Activated T-helper 1 cell treated with anti-CD3 and anti-CD28 coated beads, Interleukin-12 subunit alpha, Interleukin-12 subunit beta, Interleukin-2, Interleukin-4 antibody, amounts not matched to agents 30 ng/mL and 10 ng/mL and 1 ng/mL, durations not matched to agents 14 hours and 24 hours and 36 hours (primary cell): ENCODE measurements at regions of chr7 and their contacts with region 1.

Region 1: GRCh38 chr7:50142425-50143017 is 49.5 kb upstream of the ZPBP start:
- DNase-seq: no peak
- H3K4me3 Mint-ChIP-seq: peak overlapping the region; percentile 27
- H3K27ac Mint-ChIP-seq: peak overlapping the region; percentile 2
- H3K4me1 Mint-ChIP-seq: peaks cover 34% of the 10 kb centered on the region
- H3K27me3 Mint-ChIP-seq: peaks cover 11% of the 10 kb centered on the region

Region 2: GRCh38 chr7:50047716-50048115 is 94.8 kb before region 1 on chr7:
- intact Hi-C with region 1: no loop called
- DNase-seq: no peak
- H3K4me3 Mint-ChIP-seq: no peak overlapping the region
- H3K27ac Mint-ChIP-seq: no peak overlapping the region
- H3K4me1 Mint-ChIP-seq: no peaks in the 10 kb centered on the region
- H3K27me3 Mint-ChIP-seq: peaks cover 6% of the 10 kb centered on the region

Region 3: GRCh38 chr7:50317221-50317678 is 174.7 kb after region 1 on chr7:
- intact Hi-C with region 1: loop called (anchors 1 kb)
- DNase-seq: peak; percentile 53
- H3K4me3 Mint-ChIP-seq: peak overlapping the region; percentile 82
- H3K27ac Mint-ChIP-seq: peak overlapping the region; percentile 93
- H3K4me1 Mint-ChIP-seq: peaks cover 100% of the 10 kb centered on the region
- H3K27me3 Mint-ChIP-seq: no peaks in the 10 kb centered on the region

Region 4: GRCh38 chr7:50331564-50332208 is 189.2 kb after region 1 on chr7:
- intact Hi-C with region 1: no loop called
- DNase-seq: no peak
- H3K4me3 Mint-ChIP-seq: peak overlapping the region; percentile 73
- H3K27ac Mint-ChIP-seq: peak overlapping the region; percentile 81
- H3K4me1 Mint-ChIP-seq: peaks cover 60% of the 10 kb centered on the region
- H3K27me3 Mint-ChIP-seq: no peaks in the 10 kb centered on the region

Region 5: DNA sequence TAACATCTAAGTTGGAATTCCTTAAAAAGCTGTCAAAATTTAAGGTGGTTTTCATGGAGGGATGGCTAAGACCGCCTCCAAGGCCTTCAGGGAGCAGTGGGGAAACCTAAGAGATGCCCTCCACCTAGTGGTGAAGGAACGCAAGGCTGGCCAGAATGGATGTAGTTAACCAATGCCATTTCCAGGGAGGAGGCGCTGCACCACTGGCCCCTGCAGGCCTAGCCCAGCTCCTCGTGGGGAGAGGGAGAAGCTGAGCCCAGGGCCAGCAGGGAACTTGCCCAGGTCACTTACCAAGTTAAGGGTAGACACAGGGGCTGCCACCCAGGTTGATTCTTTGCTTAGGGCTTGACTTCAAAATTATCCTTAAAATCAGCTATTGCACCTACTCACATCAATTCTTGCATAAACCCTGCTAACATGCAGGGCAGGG is 275.6 kb after region 1 on chr7:
- intact Hi-C with region 1: loop called (anchors 1 kb)
- DNase-seq: peak; percentile 64
- H3K4me3 Mint-ChIP-seq: no peak overlapping the region
- H3K27ac Mint-ChIP-seq: no peak overlapping the region
- H3K4me1 Mint-ChIP-seq: peaks cover 32% of the 10 kb centered on the region
- H3K27me3 Mint-ChIP-seq: no peaks in the 10 kb centered on the region

Region 6: GRCh38 chr7:50632561-50633413 is 490.3 kb after region 1 on chr7:
- intact Hi-C with region 1: loop called (anchors 1 kb)
- DNase-seq: peak; percentile 24
- H3K4me3 Mint-ChIP-seq: no peak overlapping the region
- H3K27ac Mint-ChIP-seq: no peak overlapping the region
- H3K4me1 Mint-ChIP-seq: peaks cover 4% of the 10 kb centered on the region
- H3K27me3 Mint-ChIP-seq: peaks cover 17% of the 10 kb centered on the region

Region 7: DNA sequence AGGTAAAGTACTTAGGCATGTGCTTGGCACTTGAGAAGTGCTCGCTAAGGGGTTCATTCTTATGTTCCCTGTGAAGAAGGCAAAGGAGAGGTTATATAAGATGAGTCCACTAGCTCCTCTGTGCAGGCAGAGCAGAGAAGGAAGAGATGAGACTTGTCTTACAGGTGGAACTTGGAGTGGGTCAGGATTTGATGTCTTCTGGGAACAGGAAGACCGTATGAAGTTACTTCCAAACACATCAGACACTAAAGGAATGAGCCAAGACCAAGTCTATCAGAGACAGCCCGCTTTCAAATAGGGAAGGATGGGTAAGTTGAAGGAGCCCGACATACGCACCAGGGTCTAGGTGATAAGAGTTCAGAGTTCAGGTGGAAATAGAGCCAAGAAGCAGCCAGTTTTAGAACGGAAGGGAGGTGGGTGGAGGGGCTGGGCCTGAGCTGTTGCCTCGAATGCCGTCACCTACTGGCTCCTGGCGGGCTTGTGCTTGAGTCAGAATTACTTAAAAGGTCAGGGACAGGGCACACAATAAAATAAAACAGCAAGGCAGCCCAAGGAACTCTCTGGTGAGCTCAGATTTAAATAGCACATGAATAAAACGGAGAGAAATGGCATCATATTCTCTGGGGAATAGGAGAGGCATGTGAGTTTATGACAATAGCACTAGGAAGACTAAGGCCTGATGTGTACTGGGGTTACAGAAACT is 696.3 kb after region 1 on chr7:
- intact Hi-C with region 1: loop called (anchors 10 kb)
- DNase-seq: no peak
- H3K4me3 Mint-ChIP-seq: no peak overlapping the region
- H3K27ac Mint-ChIP-seq: no peak overlapping the region
- H3K4me1 Mint-ChIP-seq: peaks cover 11% of the 10 kb centered on the region
- H3K27me3 Mint-ChIP-seq: peaks cover 50% of the 10 kb centered on the region